MCF 10A (cell line): ENCODE measurements at regions of chr11 and their contacts with region 1.

Region 1: DNA sequence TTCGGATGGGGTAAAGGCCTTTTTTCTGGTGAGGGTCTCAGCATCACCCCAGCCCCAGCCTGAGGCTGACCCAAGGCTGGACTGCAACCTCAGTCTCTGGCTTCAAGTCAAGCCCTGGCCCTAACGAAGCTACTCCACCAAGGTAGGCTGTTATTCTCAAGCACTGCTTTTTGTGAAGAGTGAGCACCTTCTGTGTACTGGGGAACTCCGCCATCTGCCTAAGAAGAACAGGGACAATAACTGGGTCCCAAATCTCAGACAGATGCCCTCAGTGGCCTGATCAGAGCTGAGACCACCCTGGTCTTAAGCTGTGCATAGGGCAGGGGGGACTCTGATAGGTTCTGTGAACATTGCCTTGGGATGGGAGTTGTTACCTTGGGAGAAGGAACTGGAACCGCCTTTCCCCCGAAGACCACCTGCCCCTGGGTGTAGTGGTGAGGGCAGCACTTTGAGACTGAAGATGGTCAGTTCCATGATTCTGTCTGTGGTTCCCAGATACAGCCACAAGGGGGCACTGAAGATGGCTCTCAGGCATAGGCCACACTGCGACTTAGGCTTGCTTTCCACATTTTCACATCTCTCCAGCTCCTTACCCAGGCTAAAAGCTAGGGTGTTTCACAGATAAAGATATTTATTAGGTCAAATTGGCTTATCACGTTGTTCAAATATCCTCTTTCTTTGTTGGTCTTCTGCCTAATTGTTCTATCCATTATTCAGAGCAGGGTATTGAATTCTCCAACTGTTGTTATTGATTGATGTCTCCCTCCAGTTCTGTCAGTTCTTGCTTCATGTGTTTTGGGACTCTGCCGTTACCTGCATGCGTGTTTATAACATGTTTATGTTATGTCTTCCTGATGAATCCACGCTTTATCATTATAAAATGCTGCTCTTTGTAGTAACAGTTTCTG is 11.8 kb upstream of the UVRAG start:
- DNase-seq: peak; percentile 76
- H3K4me3 Mint-ChIP-seq: no peak overlapping the region
- H3K27ac Mint-ChIP-seq: no peak overlapping the region
- H3K4me1 Mint-ChIP-seq: no peaks in the 10 kb centered on the region
- H3K27me3 Mint-ChIP-seq: no peaks in the 10 kb centered on the region
- CTCF ChIP-seq: peak; percentile 79

Region 2: GRCh38 chr11:75592715-75593114 is 210.5 kb before region 1 on chr11:
- CTCF ChIA-PET with region 1: no interaction called
- POLR2A ChIA-PET with region 1: no interaction called
- intact Hi-C with region 1: no loop called
- DNase-seq: no peak
- H3K4me3 Mint-ChIP-seq: no peak overlapping the region
- H3K27ac Mint-ChIP-seq: no peak overlapping the region
- H3K4me1 Mint-ChIP-seq: peaks cover 6% of the 10 kb centered on the region
- H3K27me3 Mint-ChIP-seq: peaks cover 18% of the 10 kb centered on the region
- CTCF ChIP-seq: no peak

Region 3: DNA sequence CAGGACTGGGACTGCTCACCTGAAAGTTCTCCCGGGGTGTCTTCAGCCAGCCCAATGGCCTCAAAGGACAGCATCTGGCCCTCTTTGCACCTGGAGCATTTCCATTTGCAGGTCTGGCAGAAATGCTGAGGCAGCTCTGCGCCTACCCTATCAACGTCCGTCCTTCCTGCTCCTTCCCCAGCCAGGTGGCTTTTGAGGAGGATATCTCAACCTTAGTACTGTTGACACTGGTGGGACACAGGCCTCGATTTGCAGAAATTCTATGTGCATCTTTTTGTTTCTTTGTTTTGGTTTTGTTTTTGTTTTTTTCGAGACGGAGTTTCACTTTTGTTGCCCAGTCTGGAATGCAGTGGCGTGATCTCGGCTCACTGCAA is 80.5 kb before region 1 on chr11:
- CTCF ChIA-PET with region 1: no interaction called
- POLR2A ChIA-PET with region 1: no interaction called
- intact Hi-C with region 1: loop called (anchors 1 kb)
- DNase-seq: no peak
- H3K4me3 Mint-ChIP-seq: no peak overlapping the region
- H3K27ac Mint-ChIP-seq: no peak overlapping the region
- H3K4me1 Mint-ChIP-seq: no peaks in the 10 kb centered on the region
- H3K27me3 Mint-ChIP-seq: no peaks in the 10 kb centered on the region
- CTCF ChIP-seq: no peak

Region 4: DNA sequence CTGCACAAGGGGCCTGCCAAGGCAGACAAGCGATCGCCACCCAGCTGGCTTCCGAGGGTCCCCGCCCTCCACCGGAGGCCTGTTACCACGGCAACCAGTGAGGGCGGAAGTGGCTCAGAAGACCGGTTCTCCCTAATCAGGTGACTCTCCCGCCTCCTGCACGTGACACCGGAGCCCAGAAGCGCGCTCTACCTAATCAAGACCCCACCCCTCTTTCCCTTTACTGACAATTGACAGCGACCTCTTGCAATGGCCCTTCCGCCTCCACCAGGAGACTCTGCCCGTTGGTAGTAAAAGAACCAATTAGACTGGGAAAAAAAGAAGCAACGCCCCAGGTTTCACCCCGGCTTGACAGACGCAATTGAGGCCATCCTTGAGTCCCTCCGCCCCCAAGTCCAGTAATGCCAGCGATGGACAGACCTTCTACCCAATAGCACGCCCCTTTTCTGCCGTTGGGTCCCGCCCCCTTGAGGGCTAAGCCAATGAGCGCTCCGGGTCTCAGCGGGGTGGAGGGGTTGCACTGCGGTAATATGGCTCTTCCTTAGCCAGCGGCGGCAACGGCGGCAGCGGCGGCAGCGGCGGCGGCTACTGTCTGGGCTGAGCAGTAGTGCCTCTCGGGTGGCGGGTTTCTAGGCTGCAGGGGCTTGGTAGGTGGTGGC is 11.6 kb after region 1 on chr11 and contains the start of gene UVRAG:
- CTCF ChIA-PET with region 1: interaction called, 33 read pairs
- POLR2A ChIA-PET with region 1: interaction called, 3 read pairs
- intact Hi-C with region 1: no loop called
- DNase-seq: peak; percentile 100
- H3K4me3 Mint-ChIP-seq: no peak within 1 kb of the TSS
- H3K27ac Mint-ChIP-seq: no peak within 1 kb of the TSS
- H3K4me1 Mint-ChIP-seq: peaks cover 11% of the 10 kb centered on the region
- H3K27me3 Mint-ChIP-seq: no peaks in the 10 kb centered on the region
- CTCF ChIP-seq: no peak
- total RNA-seq, gene UVRAG: 12.4 and 16.1 TPM in 2 replicates

Region 5: DNA sequence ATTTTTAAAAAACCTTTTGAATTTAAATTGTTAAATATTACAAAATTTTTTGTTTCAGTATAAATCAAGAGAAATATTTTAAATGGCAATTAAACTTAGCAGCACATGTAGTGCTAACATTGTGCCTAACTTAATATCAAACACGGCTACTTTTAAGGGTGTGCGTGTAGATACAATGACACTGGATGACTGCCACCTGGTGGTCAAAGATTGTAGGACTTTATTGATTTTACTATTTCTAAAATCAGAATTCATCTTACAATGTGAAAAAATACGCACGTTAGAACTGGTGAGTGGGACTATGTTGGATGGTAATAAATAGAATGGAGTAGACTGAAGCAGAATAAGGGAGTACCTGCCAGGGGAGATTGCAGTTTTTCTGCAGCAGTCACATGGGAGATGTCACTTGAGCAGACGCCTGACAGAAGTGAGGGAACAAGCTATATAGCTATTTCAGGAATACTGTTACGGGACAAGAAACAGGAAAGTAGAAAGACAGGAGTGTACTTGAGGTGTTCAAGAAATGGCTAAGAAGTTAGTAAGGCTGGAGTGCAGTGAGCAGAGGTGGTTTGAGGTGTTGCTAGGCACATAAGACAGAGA is 64.7 kb after region 1 on chr11:
- CTCF ChIA-PET with region 1: interaction called, 73 read pairs
- POLR2A ChIA-PET with region 1: interaction called, 3 read pairs
- intact Hi-C with region 1: loop called (anchors 1 kb)
- DNase-seq: peak; percentile 60
- H3K4me3 Mint-ChIP-seq: no peak overlapping the region
- H3K27ac Mint-ChIP-seq: no peak overlapping the region
- H3K4me1 Mint-ChIP-seq: no peaks in the 10 kb centered on the region
- H3K27me3 Mint-ChIP-seq: no peaks in the 10 kb centered on the region
- CTCF ChIP-seq: peak; percentile 41

Region 6: GRCh38 chr11:76056876-76057275 is 253.7 kb after region 1 on chr11:
- CTCF ChIA-PET with region 1: no interaction called
- POLR2A ChIA-PET with region 1: no interaction called
- intact Hi-C with region 1: no loop called
- DNase-seq: no peak
- H3K4me3 Mint-ChIP-seq: no peak overlapping the region
- H3K27ac Mint-ChIP-seq: no peak overlapping the region
- H3K4me1 Mint-ChIP-seq: no peaks in the 10 kb centered on the region
- H3K27me3 Mint-ChIP-seq: no peaks in the 10 kb centered on the region
- CTCF ChIP-seq: no peak

Region 7: GRCh38 chr11:76318744-76319384 is 515.7 kb after region 1 on chr11:
- CTCF ChIA-PET with region 1: interaction called, 6 read pairs
- POLR2A ChIA-PET with region 1: no interaction called
- intact Hi-C with region 1: loop called (anchors 1 kb)
- DNase-seq: peak; percentile 80
- H3K4me3 Mint-ChIP-seq: no peak overlapping the region
- H3K27ac Mint-ChIP-seq: no peak overlapping the region
- H3K4me1 Mint-ChIP-seq: peaks cover 9% of the 10 kb centered on the region
- H3K27me3 Mint-ChIP-seq: no peaks in the 10 kb centered on the region
- CTCF ChIP-seq: peak; percentile 93